T-cell (primary cell): ENCODE measurements at regions of chr4 and their contacts with region 1.

Region 1: GRCh38 chr4:139690419-139690818 is 24.8 kb downstream of the MGST2 start:
- DNase-seq: no peak
- ATAC-seq: no peak
- H3K4me3 ChIP-seq: no peak overlapping the region
- H3K4me3 Mint-ChIP-seq: no peak overlapping the region
- H3K27ac ChIP-seq: no peak overlapping the region
- H3K27ac Mint-ChIP-seq: no peak overlapping the region
- H3K4me1 ChIP-seq: no peaks in the 10 kb centered on the region
- H3K4me1 Mint-ChIP-seq: peaks cover under 1 to 2% (median under 1%) of the 10 kb centered on the region in 3 donors
- H3K27me3 ChIP-seq: no peaks in the 10 kb centered on the region
- H3K27me3 Mint-ChIP-seq: no peaks in the 10 kb centered on the region

Region 2: GRCh38 chr4:139007640-139008039 is 682.8 kb before region 1 on chr4:
- CTCF ChIA-PET with region 1: no interaction called
- POLR2A ChIA-PET with region 1: interaction called in 1 of 2 experiments, 17 read pairs
- DNase-seq: no peak
- ATAC-seq: no peak
- H3K4me3 ChIP-seq: no peak overlapping the region
- H3K4me3 Mint-ChIP-seq: no peak overlapping the region
- H3K27ac ChIP-seq: no peak overlapping the region
- H3K27ac Mint-ChIP-seq: no peak overlapping the region
- H3K4me1 ChIP-seq: no peaks in the 10 kb centered on the region
- H3K4me1 Mint-ChIP-seq: no peaks in the 10 kb centered on the region
- H3K27me3 ChIP-seq: peaks cover 0 to 2% of the 10 kb centered on the region in 2 experiments
- H3K27me3 Mint-ChIP-seq: no peaks in the 10 kb centered on the region